H1 (cell line): ENCODE measurements at regions of chr4 and their contacts with region 1.

Region 1: GRCh38 chr4:87006676-87007527 is 72.1 kb downstream of the AFF1 start:
- DNase-seq: peak; percentile 79 to 93
- H3K4me3 ChIP-seq: peak overlapping the region; percentile 63 to 94 (median 88)
- H3K27ac ChIP-seq: peak overlapping the region; percentile 88
- H3K4me1 ChIP-seq: peaks cover 9 to 28% (median 23%) of the 10 kb centered on the region in 4 experiments; a peak in 6 of 7 replicates
- H3K27me3 ChIP-seq: no peaks in the 10 kb centered on the region
- CTCF ChIP-seq: no peak; a peak in 2 of 4 replicates
- EP300 ChIP-seq: peak in 1 of 2 experiments; percentile 94; a peak in 2 of 3 replicates
- POLR2A ChIP-seq: peak; percentile 99
- RAD21 ChIP-seq: peak in 1 of 2 experiments; percentile 14; a peak in 1 of 4 replicates

Region 2: DNA sequence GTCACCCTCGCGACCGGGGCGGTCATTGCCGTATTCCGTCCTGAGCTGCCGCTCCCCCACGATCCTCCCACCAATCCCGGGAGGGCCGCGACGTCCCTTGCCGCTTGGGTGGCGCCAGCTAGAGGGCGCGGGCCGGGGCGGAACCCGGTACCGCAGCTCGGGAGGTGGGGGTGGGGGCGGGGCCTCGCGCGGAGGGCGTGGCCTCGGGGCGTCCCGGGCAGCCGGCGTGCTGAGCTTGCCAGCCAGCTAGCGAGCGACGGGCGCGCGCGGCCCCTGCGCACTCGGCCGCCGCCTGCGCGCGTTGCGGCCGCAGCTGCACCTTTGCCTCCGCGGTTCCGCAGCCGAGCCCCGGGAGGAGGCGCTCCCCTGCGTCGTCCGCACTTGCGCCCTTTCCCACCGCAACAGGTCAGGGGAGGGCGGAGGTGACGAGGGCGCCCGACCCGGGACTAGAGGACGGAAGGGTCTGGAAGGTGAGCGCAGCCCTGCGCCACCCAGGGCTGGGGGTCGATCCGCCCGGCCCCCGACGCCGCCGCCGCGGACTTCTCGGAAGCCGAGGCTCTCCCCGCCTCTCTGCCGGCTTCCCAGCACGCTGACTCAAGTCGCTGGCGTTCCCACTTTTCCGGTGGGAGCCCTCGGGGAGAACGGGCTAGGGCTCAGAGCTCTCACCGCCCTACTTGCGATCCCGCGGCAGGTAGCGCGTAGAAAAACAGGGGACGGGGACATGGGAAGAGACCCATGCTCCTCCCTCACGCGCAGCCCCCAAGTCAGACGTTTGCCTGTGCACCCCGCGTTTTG is 71.9 kb before region 1 on chr4 and contains the start of gene AFF1:
- CTCF ChIA-PET with region 1: interaction called, 9 read pairs
- POLR2A ChIA-PET with region 1: interaction called, 108 read pairs
- DNase-seq: peak; percentile 81 to 90
- H3K4me3 ChIP-seq: peak within 1 kb of the TSS; percentile 67 to 88 (median 80)
- H3K27ac ChIP-seq: peak within 1 kb of the TSS; percentile 81
- H3K4me1 ChIP-seq: peaks cover 0 to 5% (median 3%) of the 10 kb centered on the region in 4 experiments; a peak in 3 of 7 replicates
- H3K27me3 ChIP-seq: no peaks in the 10 kb centered on the region
- CTCF ChIP-seq: peak; percentile 33 to 39 (median 34)
- EP300 ChIP-seq: no peak; a peak in 1 of 3 replicates
- POLR2A ChIP-seq: peak; percentile 85 to 92
- RAD21 ChIP-seq: peak; percentile 12 to 41; a peak in 3 of 4 replicates
- total RNA-seq, gene AFF1: 85.4 and 85.5 TPM in 2 replicates

Region 3: GRCh38 chr4:86972997-86973396 is 33.9 kb before region 1 on chr4:
- CTCF ChIA-PET with region 1: interaction called, 4 read pairs
- POLR2A ChIA-PET with region 1: interaction called, 13 read pairs
- DNase-seq: no peak
- H3K4me3 ChIP-seq: no peak overlapping the region
- H3K27ac ChIP-seq: no peak overlapping the region
- H3K4me1 ChIP-seq: peaks cover 6 to 17% (median 12%) of the 10 kb centered on the region in 4 experiments
- H3K27me3 ChIP-seq: no peaks in the 10 kb centered on the region
- CTCF ChIP-seq: no peak
- EP300 ChIP-seq: no peak
- POLR2A ChIP-seq: no peak
- RAD21 ChIP-seq: no peak

Region 4: GRCh38 chr4:86993909-86994681 is 12.8 kb before region 1 on chr4:
- CTCF ChIA-PET with region 1: interaction called, 5 read pairs
- POLR2A ChIA-PET with region 1: interaction called, 30 read pairs
- DNase-seq: no peak
- H3K4me3 ChIP-seq: no peak overlapping the region
- H3K27ac ChIP-seq: no peak overlapping the region
- H3K4me1 ChIP-seq: peaks cover 0 to 3% (median 1%) of the 10 kb centered on the region in 4 experiments; a peak in 1 of 7 replicates
- H3K27me3 ChIP-seq: no peaks in the 10 kb centered on the region
- CTCF ChIP-seq: no peak
- EP300 ChIP-seq: no peak
- POLR2A ChIP-seq: no peak
- RAD21 ChIP-seq: no peak

Region 5: DNA sequence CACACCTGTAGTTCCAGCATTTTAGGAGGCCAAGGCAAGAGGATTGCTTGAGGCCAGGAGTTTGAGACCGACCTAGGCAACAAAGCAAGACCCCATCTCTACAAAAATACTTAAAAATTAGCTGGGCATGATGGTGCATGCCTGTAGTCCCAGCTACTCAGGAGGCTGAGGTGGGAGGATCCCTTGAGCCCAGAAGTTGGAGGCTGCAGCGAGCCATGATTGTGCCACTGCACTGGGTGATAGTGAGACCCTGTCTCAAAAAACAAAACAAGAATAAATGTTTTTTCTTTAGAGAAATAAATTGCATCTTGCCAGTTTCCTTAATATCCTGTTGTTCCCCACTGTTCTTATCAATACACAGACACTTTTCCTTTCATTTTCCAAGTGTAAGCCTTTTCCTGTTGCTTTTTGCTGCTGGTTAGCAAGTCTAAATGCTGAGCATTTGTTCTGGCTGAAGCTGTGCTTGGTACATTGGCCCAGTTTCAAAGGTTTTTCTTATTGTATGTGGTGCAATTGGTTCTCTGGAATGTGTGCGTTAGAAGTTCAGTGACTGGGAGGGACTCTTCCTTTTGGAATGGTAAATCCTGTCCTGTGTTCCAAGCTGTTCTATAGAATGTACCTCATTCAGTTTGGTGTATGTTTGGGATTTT is 26.1 kb after region 1 on chr4:
- CTCF ChIA-PET with region 1: interaction called, 3 read pairs
- POLR2A ChIA-PET with region 1: interaction called, 10 read pairs
- DNase-seq: no peak
- H3K4me3 ChIP-seq: no peak overlapping the region
- H3K27ac ChIP-seq: no peak overlapping the region
- H3K4me1 ChIP-seq: peaks cover 8 to 27% (median 18%) of the 10 kb centered on the region in 4 experiments; a peak in 6 of 7 replicates
- H3K27me3 ChIP-seq: no peaks in the 10 kb centered on the region
- CTCF ChIP-seq: no peak
- EP300 ChIP-seq: no peak
- POLR2A ChIP-seq: no peak
- RAD21 ChIP-seq: no peak